ENCODE measurements at regions of chr16 and their contacts with region 1.

Region 1: GRCh38 chr16:56700195-56700594 is 17.9 kb downstream of the MT1X start:
- DNase-seq: no peak
- H3K4me3 ChIP-seq: no peak overlapping the region
- H3K4me3 Mint-ChIP-seq: no peak overlapping the region
- H3K27ac Mint-ChIP-seq: no peak overlapping the region
- H3K4me1 ChIP-seq: no peaks in the 10 kb centered on the region
- H3K4me1 Mint-ChIP-seq: peaks cover 4% of the 10 kb centered on the region
- H3K27me3 ChIP-seq: no peaks in the 10 kb centered on the region
- H3K27me3 Mint-ChIP-seq: no peaks in the 10 kb centered on the region
- CTCF ChIP-seq: no peak

Region 2: DNA sequence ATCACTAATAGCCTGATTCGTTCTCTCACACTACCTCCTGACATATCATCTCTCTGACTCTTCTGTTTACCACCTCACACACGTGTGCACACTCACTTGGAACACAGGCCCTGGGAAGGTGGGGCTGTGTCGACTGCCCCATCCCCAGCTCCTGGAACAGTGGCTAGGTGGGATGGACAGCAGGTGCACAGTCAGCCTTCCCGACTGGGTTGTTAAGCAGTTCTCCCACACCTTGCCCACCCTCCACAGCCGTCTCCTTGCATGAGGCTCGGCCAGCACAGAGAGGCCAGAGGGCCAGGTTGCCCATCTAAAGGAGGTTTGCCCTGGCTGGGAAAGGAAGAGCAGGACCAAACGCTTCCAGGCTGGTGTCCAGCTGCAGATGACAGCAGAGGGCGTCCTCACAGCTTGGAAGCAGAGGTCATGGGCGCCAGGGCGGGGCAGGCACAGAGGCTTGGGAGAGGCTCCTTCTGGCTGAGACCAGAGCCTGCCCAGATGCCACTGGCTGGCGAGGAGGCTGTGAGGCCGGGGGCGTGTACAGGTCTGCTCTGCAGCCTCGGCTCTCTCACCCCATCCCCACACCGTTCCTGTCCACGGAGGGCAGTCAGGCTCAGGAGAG is 367.6 kb before region 1 on chr16:
- CTCF ChIA-PET with region 1: interaction called, 5 read pairs
- POLR2A ChIA-PET with region 1: no interaction called
- intact Hi-C with region 1: loop called (anchors 2 kb)
- DNase-seq: peak; percentile 88 to 90
- H3K4me3 ChIP-seq: no peak overlapping the region
- H3K4me3 Mint-ChIP-seq: no peak overlapping the region
- H3K27ac Mint-ChIP-seq: no peak overlapping the region
- H3K4me1 ChIP-seq: no peaks in the 10 kb centered on the region
- H3K4me1 Mint-ChIP-seq: no peaks in the 10 kb centered on the region
- H3K27me3 ChIP-seq: no peaks in the 10 kb centered on the region
- H3K27me3 Mint-ChIP-seq: no peaks in the 10 kb centered on the region
- CTCF ChIP-seq: peak; percentile 54 to 93

Region 3: DNA sequence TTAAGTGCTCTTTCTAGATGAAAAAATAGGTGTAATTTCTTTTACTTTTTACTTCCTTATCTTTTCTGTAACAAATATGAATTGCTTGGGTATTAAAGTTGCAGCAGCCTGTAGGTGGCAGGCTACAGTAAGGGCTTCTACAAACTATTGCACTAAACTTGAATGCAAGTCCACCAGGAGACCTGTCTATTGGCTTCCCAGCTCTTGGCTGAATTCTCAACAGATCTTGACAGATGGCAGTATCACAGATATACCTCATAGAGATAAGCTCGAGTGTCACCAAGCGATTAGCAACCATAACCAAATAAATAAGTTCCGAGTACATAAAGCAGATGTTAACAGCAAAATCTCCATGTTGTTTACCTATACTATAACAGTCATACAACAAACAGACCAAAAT is 186.2 kb before region 1 on chr16:
- CTCF ChIA-PET with region 1: interaction called, 17 read pairs
- POLR2A ChIA-PET with region 1: no interaction called
- intact Hi-C with region 1: loop called (anchors 1 kb)
- DNase-seq: peak; percentile 67 to 71
- H3K4me3 ChIP-seq: no peak overlapping the region
- H3K4me3 Mint-ChIP-seq: no peak overlapping the region
- H3K27ac Mint-ChIP-seq: no peak overlapping the region
- H3K4me1 ChIP-seq: no peaks in the 10 kb centered on the region
- H3K4me1 Mint-ChIP-seq: no peaks in the 10 kb centered on the region
- H3K27me3 ChIP-seq: no peaks in the 10 kb centered on the region
- H3K27me3 Mint-ChIP-seq: no peaks in the 10 kb centered on the region
- CTCF ChIP-seq: peak; percentile 49 to 83

Region 4: DNA sequence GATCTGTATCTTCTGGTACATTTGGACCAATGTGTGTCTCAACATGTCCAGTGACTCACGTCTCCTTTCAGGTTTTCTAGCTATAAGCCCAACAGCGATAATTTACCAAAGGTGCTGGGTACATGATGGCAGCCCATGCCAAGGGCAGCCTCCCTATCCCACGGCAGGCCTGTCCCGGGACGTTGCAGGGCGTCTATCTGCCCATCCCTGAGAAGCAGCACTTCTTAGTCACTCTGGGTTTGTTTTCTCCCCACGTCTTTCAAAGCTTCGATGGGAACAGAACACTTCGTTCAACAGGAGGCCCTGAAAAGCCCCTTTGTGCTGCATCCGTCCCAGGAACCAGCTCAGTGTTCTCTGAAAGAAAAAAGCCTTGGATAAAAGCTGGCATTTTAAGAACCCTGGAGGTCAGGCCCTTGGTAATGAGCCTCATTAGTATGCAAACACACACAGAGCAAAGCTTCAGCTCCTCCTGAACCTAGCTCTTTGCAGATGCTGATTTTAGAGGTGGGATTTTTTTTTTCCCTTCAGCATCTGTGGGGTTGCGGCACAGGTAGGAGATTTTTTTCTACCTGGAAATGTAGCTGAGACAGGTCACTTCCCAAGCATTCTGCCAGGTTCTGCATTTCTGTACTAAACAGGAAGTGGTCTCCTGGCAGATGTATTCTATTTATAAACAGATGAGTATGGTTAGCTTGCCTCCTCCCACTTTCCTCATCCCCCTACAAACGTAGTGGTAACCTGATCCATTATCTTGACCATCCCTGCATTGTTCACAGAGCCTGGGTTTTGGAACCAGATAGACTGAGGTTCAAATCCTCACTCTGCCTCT is 152.9 kb before region 1 on chr16:
- CTCF ChIA-PET with region 1: no interaction called
- POLR2A ChIA-PET with region 1: no interaction called
- intact Hi-C with region 1: no loop called
- DNase-seq: no peak
- H3K4me3 ChIP-seq: no peak overlapping the region
- H3K4me3 Mint-ChIP-seq: no peak overlapping the region
- H3K27ac Mint-ChIP-seq: no peak overlapping the region
- H3K4me1 ChIP-seq: no peaks in the 10 kb centered on the region
- H3K4me1 Mint-ChIP-seq: no peaks in the 10 kb centered on the region
- H3K27me3 ChIP-seq: no peaks in the 10 kb centered on the region
- H3K27me3 Mint-ChIP-seq: peaks cover 12% of the 10 kb centered on the region
- CTCF ChIP-seq: no peak

Region 5: DNA sequence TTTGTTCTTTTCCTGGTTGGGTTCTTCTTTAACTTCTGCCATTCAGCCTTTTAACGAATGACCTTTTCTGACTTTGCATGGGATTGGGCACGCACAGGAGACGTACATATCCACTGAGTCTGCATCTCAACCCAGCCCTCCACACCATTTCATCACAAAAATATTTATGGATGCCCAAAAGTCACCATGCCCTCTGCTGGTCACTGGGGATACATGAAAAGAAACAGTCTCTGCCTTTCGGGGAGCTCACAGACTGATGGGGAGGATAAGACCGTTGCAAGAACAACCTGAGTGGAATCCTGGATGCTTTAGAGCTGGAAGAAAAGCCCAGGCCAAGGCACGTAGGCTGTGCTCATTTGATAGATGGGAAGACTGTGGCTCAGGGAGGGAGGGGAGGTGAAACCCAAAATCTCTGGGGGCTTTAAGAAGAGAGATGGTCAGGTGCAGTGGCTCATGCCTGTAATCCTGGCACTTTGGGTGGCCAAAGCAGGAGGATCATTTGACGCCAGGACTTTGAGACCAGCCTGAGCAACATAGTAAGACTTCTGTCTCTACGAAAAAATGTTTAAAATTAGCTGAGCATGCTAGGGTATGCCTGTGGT is 99.7 kb before region 1 on chr16:
- CTCF ChIA-PET with region 1: interaction called, 95 read pairs
- POLR2A ChIA-PET with region 1: interaction called, 3 read pairs
- intact Hi-C with region 1: loop called (anchors 1 kb)
- DNase-seq: peak; percentile 53 to 58
- H3K4me3 ChIP-seq: no peak overlapping the region
- H3K4me3 Mint-ChIP-seq: no peak overlapping the region
- H3K27ac Mint-ChIP-seq: no peak overlapping the region
- H3K4me1 ChIP-seq: no peaks in the 10 kb centered on the region
- H3K4me1 Mint-ChIP-seq: peaks cover 8% of the 10 kb centered on the region
- H3K27me3 ChIP-seq: no peaks in the 10 kb centered on the region
- H3K27me3 Mint-ChIP-seq: peaks cover 11% of the 10 kb centered on the region
- CTCF ChIP-seq: peak; percentile 67 to 84

Region 6: GRCh38 chr16:56657555-56658326 is 42.5 kb before region 1 on chr16 and contains the start of gene MT1F:
- CTCF ChIA-PET with region 1: interaction called, 4 read pairs
- POLR2A ChIA-PET with region 1: interaction called, 5 read pairs
- intact Hi-C with region 1: loop called (anchors 5 kb)
- DNase-seq: peak; percentile 88 to 97
- H3K4me3 ChIP-seq: peak within 1 kb of the TSS; percentile 69
- H3K4me3 Mint-ChIP-seq: peak within 1 kb of the TSS; percentile 81
- H3K27ac Mint-ChIP-seq: no peak within 1 kb of the TSS
- H3K4me1 ChIP-seq: peaks cover 11% of the 10 kb centered on the region
- H3K4me1 Mint-ChIP-seq: no peaks in the 10 kb centered on the region
- H3K27me3 ChIP-seq: no peaks in the 10 kb centered on the region; the same call in 1 of the 2 replicates
- H3K27me3 Mint-ChIP-seq: peaks cover 13% of the 10 kb centered on the region
- CTCF ChIP-seq: peak in 1 of 2 experiments; percentile 9
- total RNA-seq, gene MT1F: 2.8 and 12.5 TPM in 2 replicates

Region 7: DNA sequence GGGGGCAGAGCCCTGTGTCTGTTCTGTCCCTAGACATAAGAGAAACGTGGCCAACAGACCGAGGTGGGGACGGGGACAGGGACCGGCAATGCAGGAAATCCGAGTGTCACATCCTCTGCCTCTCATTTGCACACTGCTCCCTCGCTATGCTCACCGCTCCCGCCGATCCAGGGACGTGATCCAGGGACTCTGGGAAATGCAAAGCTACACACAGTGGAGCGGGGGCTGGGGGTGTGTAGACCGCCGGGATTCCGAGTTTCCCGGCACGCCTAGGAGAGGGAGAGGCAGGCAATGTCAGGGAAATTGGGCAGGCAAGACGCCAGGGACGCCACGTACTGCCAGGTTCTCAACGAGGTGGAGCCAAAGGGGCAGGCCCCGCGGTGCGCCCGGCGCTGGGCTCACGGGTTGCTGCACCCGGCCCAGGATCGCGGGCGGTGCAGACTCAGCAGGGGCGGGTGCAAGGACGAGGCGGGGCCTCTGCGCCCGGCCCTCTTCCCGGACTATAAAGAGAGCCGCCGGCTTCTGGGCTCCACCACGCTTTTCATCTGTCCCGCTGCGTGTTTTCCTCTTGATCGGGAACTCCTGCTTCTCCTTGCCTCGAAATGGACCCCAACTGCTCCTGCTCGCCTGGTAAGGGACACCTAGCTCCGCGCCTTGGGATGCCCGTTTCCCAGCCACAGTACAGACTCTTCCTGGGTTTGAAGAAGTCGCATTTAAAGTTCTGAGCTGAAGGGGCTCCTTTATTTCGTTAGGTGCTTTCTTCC is 18.1 kb before region 1 on chr16 and contains the start of gene MT1X:
- CTCF ChIA-PET with region 1: interaction called, 11 read pairs
- POLR2A ChIA-PET with region 1: interaction called, 3 read pairs
- intact Hi-C with region 1: no loop called
- DNase-seq: peak; percentile 81 to 88
- H3K4me3 ChIP-seq: peak within 1 kb of the TSS; percentile 65
- H3K4me3 Mint-ChIP-seq: peak within 1 kb of the TSS; percentile 95
- H3K27ac Mint-ChIP-seq: peak within 1 kb of the TSS; percentile 39
- H3K4me1 ChIP-seq: peaks cover 8% of the 10 kb centered on the region; the same call in 1 of the 2 replicates
- H3K4me1 Mint-ChIP-seq: no peaks in the 10 kb centered on the region
- H3K27me3 ChIP-seq: no peaks in the 10 kb centered on the region
- H3K27me3 Mint-ChIP-seq: peaks cover 7% of the 10 kb centered on the region
- CTCF ChIP-seq: no peak
- total RNA-seq, gene MT1X: 4.4 and 18.3 TPM in 2 replicates

Region 8: GRCh38 chr16:56729735-56730662 is 29.8 kb after region 1 on chr16 and contains the start of gene NUP93:
- CTCF ChIA-PET with region 1: no interaction called
- POLR2A ChIA-PET with region 1: no interaction called
- intact Hi-C with region 1: no loop called
- DNase-seq: peak; percentile 94 to 96
- H3K4me3 ChIP-seq: peak within 1 kb of the TSS; percentile 82
- H3K4me3 Mint-ChIP-seq: no peak within 1 kb of the TSS
- H3K27ac Mint-ChIP-seq: peak within 1 kb of the TSS; percentile 65
- H3K4me1 ChIP-seq: peaks cover 6% of the 10 kb centered on the region; the same call in 1 of the 2 replicates
- H3K4me1 Mint-ChIP-seq: peaks cover 10% of the 10 kb centered on the region
- H3K27me3 ChIP-seq: no peaks in the 10 kb centered on the region
- H3K27me3 Mint-ChIP-seq: no peaks in the 10 kb centered on the region
- CTCF ChIP-seq: no peak
- total RNA-seq, gene NUP93: 148 and 149 TPM in 2 replicates

Measured in Caco-2 (cell line).